ENCODE measurements at regions of chr13 and their contacts with region 1.

Region 1: DNA sequence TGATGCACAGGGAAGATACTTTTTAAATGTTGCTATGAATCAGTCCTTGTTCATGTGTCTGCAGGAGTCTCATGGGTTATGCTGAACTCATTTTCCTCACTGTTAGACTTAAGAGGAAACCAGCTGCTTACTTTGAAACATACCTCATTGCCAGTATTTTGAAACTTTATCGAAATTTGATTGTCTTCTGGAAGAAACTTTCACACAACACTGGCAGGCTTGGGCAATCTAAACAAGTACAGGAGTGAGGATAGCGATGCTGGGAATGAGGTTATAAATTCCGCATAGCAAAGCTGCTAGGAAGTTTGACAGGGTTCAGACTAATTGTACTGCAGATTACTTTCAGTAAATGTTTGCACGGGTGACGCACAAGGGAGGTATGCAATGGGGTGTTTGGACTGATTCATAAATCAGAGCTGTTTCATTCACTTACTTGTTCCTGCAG is 245.7 kb downstream of the DNAJC15 start:
- DNase-seq: no peak
- ATAC-seq: peak in 7 of 8 donors; percentile 55 to 94 (median 88)
- H3K4me3 ChIP-seq: peak overlapping the region in 1 of 10 donors; percentile 6
- H3K27ac ChIP-seq: peak overlapping the region in 9 of 10 donors; percentile 15 to 69 (median 55)
- H3K4me1 ChIP-seq: peaks cover 0 to 26% (median 17%) of the 10 kb centered on the region in 9 donors
- H3K27me3 ChIP-seq: no peaks in the 10 kb centered on the region
- CTCF ChIP-seq: no peak

Region 2: GRCh38 chr13:43203781-43204180 is 65.3 kb before region 1 on chr13:
- intact Hi-C with region 1: loop called in 1 of 10 experiments (anchors 5 kb)
- DNase-seq: no peak
- ATAC-seq: no peak
- H3K4me3 ChIP-seq: no peak overlapping the region
- H3K27ac ChIP-seq: no peak overlapping the region
- H3K4me1 ChIP-seq: peaks cover 0 to 3% (median 0%) of the 10 kb centered on the region in 9 donors
- H3K27me3 ChIP-seq: no peaks in the 10 kb centered on the region
- CTCF ChIP-seq: no peak

Measured in heart right ventricle (tissue), 16 donors.